ENCODE measurements at regions of chr2 and their contacts with region 1.

Region 1: GRCh38 chr2:170554278-170554955 is 160.7 kb upstream of the SP5 start:
- DNase-seq: peak; percentile 69 to 96
- H3K4me3 ChIP-seq: no peak overlapping the region
- H3K27ac ChIP-seq: peak overlapping the region; percentile 81 to 91
- H3K4me1 ChIP-seq: peaks cover 6 to 17% of the 10 kb centered on the region in 2 donors
- H3K27me3 ChIP-seq: no peaks in the 10 kb centered on the region
- CTCF ChIP-seq: no peak

Region 2: DNA sequence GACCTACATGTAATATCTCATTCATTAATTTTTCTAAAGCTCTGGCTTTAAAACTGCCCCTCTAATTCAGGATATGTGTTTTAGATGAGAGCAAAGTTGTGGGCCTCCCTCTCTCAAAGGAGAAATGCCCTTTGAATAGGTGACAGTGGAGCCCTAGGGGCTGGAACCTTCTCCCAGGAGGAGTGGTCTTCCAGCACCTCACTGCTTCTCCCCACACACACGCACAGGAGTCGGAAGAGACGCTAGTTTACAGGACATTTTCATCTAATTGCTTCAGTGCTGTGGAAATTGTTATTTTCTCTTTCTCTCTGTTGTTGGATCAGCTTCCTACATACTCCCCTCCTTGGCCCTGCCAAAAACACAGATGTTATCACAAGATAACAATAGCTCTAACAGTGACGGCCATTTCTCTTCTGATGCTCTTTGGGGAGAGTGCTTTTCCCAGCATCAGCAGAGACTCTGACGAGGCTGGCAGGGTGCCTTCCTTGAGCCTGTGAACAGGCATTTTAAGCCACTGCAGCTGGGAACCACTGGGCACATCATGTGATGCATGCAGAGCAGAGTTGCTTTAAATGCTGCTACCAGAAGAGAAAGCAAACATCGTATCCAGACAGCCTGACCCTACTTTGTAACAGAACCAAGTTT is 48.7 kb before region 1 on chr2:
- intact Hi-C with region 1: loop called (anchors 5 kb)
- DNase-seq: peak in 1 of 2 donors; percentile 73
- H3K4me3 ChIP-seq: peak overlapping the region in 1 of 2 donors; percentile 21
- H3K27ac ChIP-seq: peak overlapping the region; percentile 56 to 72
- H3K4me1 ChIP-seq: peaks cover 0 to 8% of the 10 kb centered on the region in 2 donors
- H3K27me3 ChIP-seq: no peaks in the 10 kb centered on the region
- CTCF ChIP-seq: no peak

Region 3: GRCh38 chr2:170525566-170525900 is 28.9 kb before region 1 on chr2:
- intact Hi-C with region 1: loop called (anchors 1 kb)
- DNase-seq: peak; percentile 58 to 94
- H3K4me3 ChIP-seq: peak overlapping the region in 1 of 2 donors; percentile 8
- H3K27ac ChIP-seq: peak overlapping the region; percentile 16 to 62
- H3K4me1 ChIP-seq: peaks cover 3 to 25% of the 10 kb centered on the region in 2 donors
- H3K27me3 ChIP-seq: no peaks in the 10 kb centered on the region
- CTCF ChIP-seq: no peak

Region 4: GRCh38 chr2:170770606-170771420 is 216.4 kb after region 1 on chr2:
- intact Hi-C with region 1: loop called (anchors 2 kb)
- DNase-seq: peak in 1 of 2 donors; percentile 83
- H3K4me3 ChIP-seq: peak overlapping the region; percentile 71 to 75
- H3K27ac ChIP-seq: peak overlapping the region; percentile 68 to 80
- H3K4me1 ChIP-seq: no peaks in the 10 kb centered on the region
- H3K27me3 ChIP-seq: no peaks in the 10 kb centered on the region
- CTCF ChIP-seq: no peak